Psoas muscle (tissue), 8 donors: ENCODE measurements at regions of chrX and their contacts with region 1.

Region 1: GRCh38 chrX:129606918-129607317 is 47.8 kb downstream of the APLN start:
- DNase-seq: no peak
- ATAC-seq: peak; percentile 60 to 73 (median 63)
- H3K4me3 ChIP-seq: peak overlapping the region; percentile 15
- H3K27ac ChIP-seq: no peak overlapping the region
- H3K4me1 ChIP-seq: peaks cover 4% of the 10 kb centered on the region
- H3K27me3 ChIP-seq: no peaks in the 10 kb centered on the region
- CTCF ChIP-seq: peak; percentile 73

Region 2: GRCh38 chrX:129161108-129161507 is 445.8 kb before region 1 on chrX:
- intact Hi-C with region 1: no loop called
- DNase-seq: no peak
- ATAC-seq: no peak
- H3K4me3 ChIP-seq: no peak overlapping the region
- H3K27ac ChIP-seq: no peak overlapping the region
- H3K4me1 ChIP-seq: no peaks in the 10 kb centered on the region
- H3K27me3 ChIP-seq: no peaks in the 10 kb centered on the region
- CTCF ChIP-seq: no peak

Region 3: DNA sequence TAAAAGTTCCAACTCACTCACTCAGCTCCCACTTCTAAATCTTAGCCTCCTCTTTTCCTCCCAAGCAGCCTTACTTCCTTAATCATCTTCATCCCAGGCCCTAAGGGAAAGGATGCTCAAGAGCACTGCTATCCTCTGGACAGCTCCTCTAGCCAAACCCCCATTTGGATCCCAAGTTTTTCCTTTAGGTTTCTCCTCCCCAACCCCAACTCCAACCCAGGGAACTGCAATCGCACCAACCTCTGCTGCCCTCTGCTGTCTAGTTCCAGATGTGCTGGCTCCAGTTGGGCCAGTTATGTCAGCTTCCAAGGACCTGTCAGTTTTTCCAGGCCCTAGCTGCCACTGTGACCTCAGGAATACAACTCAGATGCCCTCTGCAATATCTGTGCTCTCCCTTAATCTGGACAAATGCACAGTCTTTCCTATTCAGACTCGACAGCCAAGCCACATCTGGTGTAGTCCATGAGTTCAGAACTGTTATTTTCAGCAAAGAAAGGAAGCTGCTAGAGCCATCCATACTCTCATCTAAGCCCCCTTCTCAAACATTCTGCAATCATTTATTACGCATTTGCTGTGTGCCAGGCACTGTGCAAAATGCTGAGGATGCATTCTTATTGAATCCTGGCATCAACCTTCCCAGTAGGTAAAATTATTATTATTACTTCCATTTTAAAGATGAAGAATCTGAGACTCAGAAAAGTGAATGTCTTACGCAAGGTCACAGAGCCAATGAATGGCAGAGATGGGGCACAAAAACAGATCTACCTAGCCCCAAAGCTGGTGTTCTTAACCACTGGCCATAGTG is 119.6 kb after region 1 on chrX:
- intact Hi-C with region 1: loop called (anchors 2 to 5 kb)
- DNase-seq: peak; percentile 56 to 73
- ATAC-seq: peak; percentile 76 to 86 (median 82)
- H3K4me3 ChIP-seq: no peak overlapping the region
- H3K27ac ChIP-seq: no peak overlapping the region
- H3K4me1 ChIP-seq: no peaks in the 10 kb centered on the region
- H3K27me3 ChIP-seq: no peaks in the 10 kb centered on the region
- CTCF ChIP-seq: peak; percentile 70

Region 4: DNA sequence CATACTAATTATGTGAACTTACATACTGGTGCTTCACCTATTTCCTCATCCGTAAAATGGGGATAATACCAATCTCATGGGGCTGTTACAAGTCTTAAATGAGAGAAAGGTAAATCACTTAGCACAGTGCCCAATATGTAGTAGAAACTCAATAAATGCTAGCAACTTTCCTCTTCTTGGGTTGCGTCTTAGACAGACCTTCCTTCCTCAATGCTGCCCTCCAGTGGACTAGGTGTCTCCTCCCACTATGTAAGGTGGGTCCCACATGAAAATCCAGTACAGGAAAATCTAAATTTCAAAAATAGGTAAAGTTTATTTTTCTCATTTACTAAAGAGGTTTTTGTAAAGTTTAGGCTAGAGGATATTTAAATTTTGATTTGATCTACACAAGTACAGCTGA is 216.2 kb after region 1 on chrX:
- intact Hi-C with region 1: loop called in 1 of 2 experiments (anchors 10 kb)
- DNase-seq: no peak
- ATAC-seq: peak in 1 of 4 donors; percentile 50
- H3K4me3 ChIP-seq: no peak overlapping the region
- H3K27ac ChIP-seq: no peak overlapping the region
- H3K4me1 ChIP-seq: no peaks in the 10 kb centered on the region
- H3K27me3 ChIP-seq: no peaks in the 10 kb centered on the region
- CTCF ChIP-seq: peak; percentile 47

Region 5: GRCh38 chrX:129905787-129906580 is 299.1 kb after region 1 on chrX and contains the start of gene UTP14A:
- intact Hi-C with region 1: loop called in 1 of 2 experiments (anchors 10 kb)
- DNase-seq: peak; percentile 87 to 93
- ATAC-seq: peak; percentile 95 to 99 (median 98)
- H3K4me3 ChIP-seq: peak within 1 kb of the TSS; percentile 81
- H3K27ac ChIP-seq: peak within 1 kb of the TSS; percentile 79
- H3K4me1 ChIP-seq: no peaks in the 10 kb centered on the region
- H3K27me3 ChIP-seq: no peaks in the 10 kb centered on the region
- CTCF ChIP-seq: no peak
- total RNA-seq, gene UTP14A: 15.2 to 18.9 (median 16.2) TPM

Region 6: DNA sequence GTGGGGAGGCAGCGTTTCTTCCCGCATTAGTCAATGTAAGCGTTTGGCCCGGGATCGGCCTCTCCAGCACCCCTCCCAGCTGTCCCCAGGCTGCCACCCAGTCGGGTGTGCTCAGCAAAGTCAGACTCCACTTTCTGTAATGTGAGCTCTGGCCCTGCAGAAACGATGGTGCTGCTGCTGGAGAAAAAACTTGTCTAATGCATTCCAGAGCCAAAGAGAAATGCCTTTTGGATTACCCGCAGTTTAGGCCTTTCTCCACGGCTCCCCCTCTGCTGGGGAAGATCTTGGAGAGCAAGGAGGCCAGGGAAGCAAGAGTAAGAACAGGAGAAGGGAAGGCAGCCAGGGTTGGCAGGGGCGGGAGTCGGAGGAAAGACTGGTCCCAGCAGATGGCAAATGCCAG is 448.2 kb after region 1 on chrX:
- intact Hi-C with region 1: loop called (anchors 5 to 10 kb)
- DNase-seq: peak; percentile 33 to 58
- ATAC-seq: peak; percentile 52 to 58 (median 54)
- H3K4me3 ChIP-seq: no peak overlapping the region
- H3K27ac ChIP-seq: peak overlapping the region; percentile 30
- H3K4me1 ChIP-seq: peaks cover 5% of the 10 kb centered on the region
- H3K27me3 ChIP-seq: no peaks in the 10 kb centered on the region
- CTCF ChIP-seq: no peak

Region 7: GRCh38 chrX:130916636-130917422 is 1309.9 kb after region 1 on chrX:
- intact Hi-C with region 1: loop called in 1 of 2 experiments (anchors 10 kb)
- DNase-seq: peak; percentile 18 to 42
- ATAC-seq: peak; percentile 44 to 77 (median 62)
- H3K4me3 ChIP-seq: no peak overlapping the region
- H3K27ac ChIP-seq: no peak overlapping the region
- H3K4me1 ChIP-seq: no peaks in the 10 kb centered on the region
- H3K27me3 ChIP-seq: peaks cover 0 to 7% (median 0%) of the 10 kb centered on the region in 3 donors
- CTCF ChIP-seq: peak; percentile 79